Activated naive CD8-positive, alpha-beta T cell treated with anti-CD3 and anti-CD28 coated beads, Interleukin-2, amount 10 ng/mL, durations not matched to agents 7 days and 5 days (primary cell): ENCODE measurements at regions of chr10 and their contacts with region 1.

Region 1: GRCh38 chr10:130110246-130111112 is at the start of gene C10orf143:
- DNase-seq: peak; percentile 100
- ATAC-seq: peak; percentile 80
- H3K4me3 Mint-ChIP-seq: peak within 1 kb of the TSS; percentile 84
- H3K27ac Mint-ChIP-seq: peak within 1 kb of the TSS; percentile 96
- H3K4me1 Mint-ChIP-seq: peaks cover 24% of the 10 kb centered on the region
- H3K27me3 Mint-ChIP-seq: no peaks in the 10 kb centered on the region
- total RNA-seq, gene C10orf143: 6.0 to 6.6 TPM

Region 2: DNA sequence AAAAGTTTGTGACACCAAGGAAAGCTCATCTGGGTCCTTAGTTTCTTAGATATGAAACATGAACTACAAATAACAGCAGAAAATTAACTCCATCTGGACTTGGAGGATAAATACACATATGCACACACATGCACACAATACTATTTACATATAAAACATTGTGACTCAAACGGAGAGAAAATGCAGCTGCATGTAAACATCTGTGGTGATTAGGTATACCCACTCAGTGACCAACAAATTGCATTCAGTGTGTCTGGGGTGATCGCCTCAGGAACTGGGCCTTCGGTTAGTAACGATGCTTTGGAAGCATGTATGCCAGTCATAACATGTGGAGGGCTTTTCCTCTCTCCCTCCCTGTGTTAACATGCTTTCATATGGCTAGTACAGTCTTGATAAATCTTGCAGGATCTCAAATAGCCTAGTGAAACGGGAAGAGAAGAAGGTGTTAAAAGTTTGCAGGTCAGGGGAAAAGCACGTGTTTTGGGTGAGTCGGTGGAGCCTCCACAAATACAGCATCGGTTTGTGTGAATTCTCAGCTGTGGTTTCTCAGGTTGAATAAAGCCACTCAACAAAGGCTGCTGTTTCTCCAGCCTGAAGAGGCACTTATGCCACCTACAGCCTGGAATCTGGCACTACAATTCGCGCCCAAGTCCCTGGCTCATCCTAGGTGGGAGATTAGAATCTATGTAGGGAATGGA is 17.0 kb after region 1 on chr10:
- POLR2A ChIA-PET with region 1: interaction called, 23 read pairs
- DNase-seq: no peak
- ATAC-seq: peak; percentile 78
- H3K4me3 Mint-ChIP-seq: no peak overlapping the region
- H3K27ac Mint-ChIP-seq: no peak overlapping the region
- H3K4me1 Mint-ChIP-seq: peaks cover 8% of the 10 kb centered on the region
- H3K27me3 Mint-ChIP-seq: peaks cover 50% of the 10 kb centered on the region

Region 3: DNA sequence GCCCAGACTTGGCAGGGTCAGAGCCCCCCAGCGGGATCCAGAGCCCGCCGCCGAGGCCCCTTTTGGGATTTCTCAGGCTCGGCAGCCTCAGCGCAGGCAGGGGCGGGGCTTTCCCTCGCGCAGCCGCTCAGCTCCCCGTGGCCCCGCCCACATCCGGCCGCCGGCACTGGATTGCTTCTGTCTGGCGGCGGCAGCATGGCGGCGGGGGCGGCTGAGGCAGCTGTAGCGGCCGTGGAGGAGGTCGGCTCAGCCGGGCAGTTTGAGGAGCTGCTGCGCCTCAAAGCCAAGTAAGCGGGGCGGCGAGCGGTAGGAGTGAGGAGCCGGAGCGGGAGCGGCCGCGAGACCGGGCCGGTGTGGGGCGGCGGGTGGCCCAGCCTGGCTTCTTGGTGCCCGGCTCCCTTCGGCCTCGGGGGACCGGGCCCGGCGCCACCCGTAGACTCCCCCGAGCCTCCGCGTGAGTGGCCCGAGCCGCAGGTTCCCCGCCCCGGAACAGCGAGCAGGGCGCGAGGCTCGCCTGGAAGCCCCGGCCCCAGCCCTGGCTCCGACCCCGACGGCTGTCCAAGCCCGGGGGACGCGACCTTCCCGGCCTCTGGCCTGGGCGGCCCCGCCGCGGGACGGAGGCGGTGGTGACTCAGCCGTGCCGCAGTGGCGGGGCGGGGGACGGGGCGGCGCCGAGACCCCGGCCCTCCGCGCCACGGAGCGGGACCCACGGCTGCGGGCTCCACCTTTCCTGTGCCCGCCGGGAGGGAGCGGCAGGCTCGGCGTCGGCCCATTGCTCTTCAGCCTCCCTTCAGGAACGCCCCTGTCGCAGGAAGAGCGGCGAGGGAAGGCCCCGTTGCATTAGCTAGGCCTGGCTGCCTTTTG is 26.0 kb after region 1 on chr10 and contains the start of gene GLRX3:
- POLR2A ChIA-PET with region 1: interaction called, 104 read pairs
- DNase-seq: peak; percentile 96
- ATAC-seq: peak; percentile 80
- H3K4me3 Mint-ChIP-seq: peak within 1 kb of the TSS; percentile 93
- H3K27ac Mint-ChIP-seq: peak within 1 kb of the TSS; percentile 86
- H3K4me1 Mint-ChIP-seq: peaks cover 33% of the 10 kb centered on the region
- H3K27me3 Mint-ChIP-seq: peaks cover 11% of the 10 kb centered on the region
- total RNA-seq, gene GLRX3: 55.5 to 60.2 TPM

Region 4: DNA sequence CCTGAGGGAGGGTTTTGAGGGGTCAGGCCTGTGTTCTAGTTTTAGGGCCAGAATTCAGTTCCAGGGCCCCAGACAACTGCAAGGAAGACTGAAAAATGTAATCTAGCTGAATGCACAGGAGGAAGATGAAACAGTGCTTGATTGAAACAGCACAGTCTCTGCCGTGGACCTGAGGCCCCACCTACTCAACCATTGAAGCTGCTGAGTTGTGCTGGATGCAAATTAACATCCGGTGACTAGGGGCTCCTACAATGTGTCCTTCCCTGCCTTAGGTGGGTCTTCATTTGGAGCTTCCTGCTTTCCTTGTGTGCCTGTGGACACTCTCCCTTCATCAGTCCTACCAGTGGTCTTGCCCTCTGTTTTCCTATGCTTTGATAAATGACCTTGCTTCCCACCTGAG is 31.4 kb after region 1 on chr10:
- POLR2A ChIA-PET with region 1: interaction called, 104 read pairs
- DNase-seq: no peak
- ATAC-seq: peak; percentile 71
- H3K4me3 Mint-ChIP-seq: peak overlapping the region; percentile 37
- H3K27ac Mint-ChIP-seq: peak overlapping the region; percentile 67
- H3K4me1 Mint-ChIP-seq: peaks cover 56% of the 10 kb centered on the region
- H3K27me3 Mint-ChIP-seq: no peaks in the 10 kb centered on the region